Activated CD8-positive, alpha-beta memory T cell treated with anti-CD3 and anti-CD28 coated beads, Interleukin-2, amount 10 ng/mL, durations not matched to agents 7 days and 5 days (primary cell): ENCODE measurements at regions of chr10 and their contacts with region 1.

Region 1: DNA sequence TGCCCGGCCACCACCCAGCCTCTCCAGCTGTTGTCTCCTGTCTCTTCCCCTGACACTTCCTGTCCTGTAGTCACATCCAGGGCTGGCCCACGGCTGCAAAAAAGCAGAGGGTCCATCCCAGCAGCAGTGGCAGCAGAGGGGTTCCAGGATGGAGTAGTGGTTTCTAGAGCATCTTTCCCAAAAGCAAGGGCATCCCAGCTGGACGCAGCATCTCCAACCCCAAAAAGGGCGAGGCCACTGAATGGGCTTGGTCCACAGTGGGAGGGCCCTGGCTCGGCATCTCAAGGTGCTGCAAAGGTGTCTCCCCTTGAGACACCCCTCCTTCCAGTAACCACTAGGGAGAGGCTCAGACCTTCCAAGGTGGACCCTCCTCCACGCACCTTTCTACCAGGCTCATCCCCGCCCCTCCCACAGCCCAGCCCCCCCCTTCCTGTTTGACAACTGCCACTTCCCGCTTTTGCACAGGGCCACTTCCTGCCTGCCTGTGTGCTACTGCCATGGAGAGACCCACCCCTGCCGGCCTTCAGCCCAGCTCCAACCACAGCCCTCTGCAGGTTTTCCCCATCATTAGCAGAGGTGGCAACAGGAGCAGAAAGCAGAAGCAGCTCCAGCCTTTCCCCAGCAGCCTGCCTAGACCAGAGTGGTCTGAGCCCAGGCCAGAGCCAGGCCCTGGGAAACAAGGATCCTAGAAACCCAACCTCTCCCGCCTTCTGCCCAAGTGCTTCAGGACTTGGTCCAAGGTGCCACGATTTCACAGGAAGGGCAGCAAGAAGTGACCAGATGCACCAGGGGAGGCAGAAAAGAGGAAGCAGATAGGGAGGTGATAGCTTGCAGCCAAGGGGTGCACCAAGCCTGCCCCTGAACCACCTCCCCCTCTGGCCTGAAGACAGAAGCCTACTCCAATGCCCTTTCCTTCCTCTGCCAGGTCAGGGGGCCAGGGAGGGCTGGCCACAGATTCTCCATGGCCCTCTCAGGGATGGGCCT is 8.6 kb downstream of the CAMK2G start:
- DNase-seq: peak; percentile 79
- ATAC-seq: peak; percentile 88
- H3K4me3 Mint-ChIP-seq: peak overlapping the region; percentile 60
- H3K27ac Mint-ChIP-seq: peak overlapping the region; percentile 95
- H3K4me1 Mint-ChIP-seq: peaks cover 82% of the 10 kb centered on the region
- H3K27me3 Mint-ChIP-seq: no peaks in the 10 kb centered on the region

Region 2: DNA sequence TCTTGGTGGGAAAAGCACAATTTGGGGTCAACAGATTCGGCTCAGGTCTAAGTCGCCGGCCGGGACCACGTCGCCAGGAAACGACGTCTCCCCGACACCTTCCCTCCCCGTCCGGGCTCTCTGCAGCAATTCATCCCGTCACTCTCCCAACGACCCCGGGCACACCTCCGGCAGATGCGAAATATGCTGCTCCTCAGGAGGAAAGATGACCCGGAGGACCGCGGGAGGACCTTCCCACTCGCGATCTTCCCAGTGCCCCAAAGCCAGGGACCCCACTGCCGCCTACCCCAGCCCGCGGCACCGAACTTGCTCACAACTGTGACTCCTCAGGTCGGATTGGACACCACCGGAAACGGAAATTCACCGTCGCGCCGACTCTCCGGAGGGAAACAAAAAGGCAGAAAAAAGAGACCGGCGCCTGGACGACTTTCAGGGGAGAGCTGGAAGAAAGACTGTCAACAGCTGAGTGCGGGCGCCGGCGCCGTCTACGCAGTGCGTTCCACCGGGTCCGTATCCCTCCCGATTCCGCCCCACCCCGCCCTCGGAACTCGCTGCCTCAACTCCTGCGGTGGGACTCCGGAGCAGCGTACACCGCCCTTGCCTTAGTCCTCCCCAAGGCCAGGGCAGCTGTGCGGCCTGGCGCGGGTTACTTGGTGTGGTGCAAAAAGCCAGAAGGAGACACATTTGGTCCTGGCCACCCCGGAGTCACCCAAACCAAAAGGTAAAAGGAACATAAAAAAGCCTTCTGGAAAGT is 135.4 kb before region 1 on chr10:
- CTCF ChIA-PET with region 1: no interaction called
- DNase-seq: peak; percentile 95
- ATAC-seq: peak; percentile 95
- H3K4me3 Mint-ChIP-seq: peak overlapping the region; percentile 98
- H3K27ac Mint-ChIP-seq: peak overlapping the region; percentile 96
- H3K4me1 Mint-ChIP-seq: peaks cover 15% of the 10 kb centered on the region
- H3K27me3 Mint-ChIP-seq: no peaks in the 10 kb centered on the region

Region 3: GRCh38 chr10:73848821-73849489 is 16.8 kb before region 1 on chr10:
- CTCF ChIA-PET with region 1: interaction called, 17 read pairs
- DNase-seq: peak; percentile 96
- ATAC-seq: peak; percentile 98
- H3K4me3 Mint-ChIP-seq: peak overlapping the region; percentile 48
- H3K27ac Mint-ChIP-seq: peak overlapping the region; percentile 78
- H3K4me1 Mint-ChIP-seq: peaks cover 15% of the 10 kb centered on the region
- H3K27me3 Mint-ChIP-seq: no peaks in the 10 kb centered on the region

Region 4: DNA sequence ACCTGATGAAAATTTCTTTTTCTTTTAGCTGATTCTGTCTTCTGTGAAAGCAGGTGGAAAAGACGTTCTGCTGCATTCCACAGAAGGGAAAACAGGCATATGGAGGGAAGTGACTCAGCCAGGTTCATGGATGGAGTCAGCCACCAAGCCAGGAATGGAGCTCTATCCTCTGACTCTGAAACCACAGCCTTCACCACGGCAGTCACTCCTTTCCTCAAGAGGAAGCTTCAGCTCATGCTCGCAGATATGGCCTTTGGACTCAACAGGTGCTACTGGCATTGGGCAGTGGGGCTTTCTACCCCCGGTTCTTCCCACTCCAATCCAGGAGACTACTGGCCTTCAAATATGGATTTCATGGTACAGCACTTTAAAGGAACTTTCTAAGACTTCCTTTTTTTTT is 33.7 kb after region 1 on chr10:
- CTCF ChIA-PET with region 1: no interaction called
- DNase-seq: no peak
- ATAC-seq: no peak
- H3K4me3 Mint-ChIP-seq: no peak overlapping the region
- H3K27ac Mint-ChIP-seq: no peak overlapping the region
- H3K4me1 Mint-ChIP-seq: peaks cover 18% of the 10 kb centered on the region
- H3K27me3 Mint-ChIP-seq: peaks cover 17% of the 10 kb centered on the region

Region 5: GRCh38 chr10:73931767-73932619 is 66.2 kb after region 1 on chr10:
- CTCF ChIA-PET with region 1: no interaction called
- DNase-seq: peak; percentile 80
- ATAC-seq: peak; percentile 89
- H3K4me3 Mint-ChIP-seq: no peak overlapping the region
- H3K27ac Mint-ChIP-seq: peak overlapping the region; percentile 73
- H3K4me1 Mint-ChIP-seq: peaks cover 19% of the 10 kb centered on the region
- H3K27me3 Mint-ChIP-seq: peaks cover 3% of the 10 kb centered on the region